Colonic mucosa (tissue), 4 donors: ENCODE measurements at regions of chr14 and their contacts with region 1.

Region 1: DNA sequence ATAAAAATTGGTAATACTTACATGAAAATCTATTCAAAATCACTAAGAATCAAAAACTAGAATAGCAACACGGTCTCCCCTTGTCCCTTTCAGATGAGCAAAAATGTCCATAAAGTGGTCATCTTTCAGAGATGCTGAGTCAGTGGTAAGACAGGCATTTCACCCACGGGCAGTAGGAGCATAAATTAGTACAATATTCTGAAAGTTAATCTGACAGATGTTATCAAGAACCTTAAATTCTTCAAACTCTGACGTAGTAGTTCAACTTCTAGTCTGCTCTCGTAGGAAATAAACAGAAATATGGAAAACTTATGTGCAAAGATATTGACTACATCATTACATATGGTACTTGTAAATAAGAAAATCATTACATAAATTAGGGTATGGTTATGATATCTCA is 33.1 kb upstream of the GNPNAT1 start:
- DNase-seq: no peak
- H3K4me3 ChIP-seq: no peak overlapping the region
- H3K27ac ChIP-seq: no peak overlapping the region
- H3K4me1 ChIP-seq: no peaks in the 10 kb centered on the region
- H3K27me3 ChIP-seq: no peaks in the 10 kb centered on the region
- CTCF ChIP-seq: no peak

Region 2: GRCh38 chr14:52961060-52961639 is 136.6 kb after region 1 on chr14:
- intact Hi-C with region 1: loop called (anchors 5 kb)
- DNase-seq: peak; percentile 28
- H3K4me3 ChIP-seq: no peak overlapping the region
- H3K27ac ChIP-seq: no peak overlapping the region
- H3K4me1 ChIP-seq: no peaks in the 10 kb centered on the region
- H3K27me3 ChIP-seq: no peaks in the 10 kb centered on the region
- CTCF ChIP-seq: no peak

Region 3: GRCh38 chr14:53044486-53044885 is 220.0 kb after region 1 on chr14:
- intact Hi-C with region 1: no loop called
- DNase-seq: no peak
- H3K4me3 ChIP-seq: no peak overlapping the region
- H3K27ac ChIP-seq: no peak overlapping the region
- H3K4me1 ChIP-seq: no peaks in the 10 kb centered on the region
- H3K27me3 ChIP-seq: no peaks in the 10 kb centered on the region
- CTCF ChIP-seq: no peak

Region 4: GRCh38 chr14:53055003-53055402 is 230.5 kb after region 1 on chr14:
- intact Hi-C with region 1: loop called (anchors 5 kb)
- DNase-seq: no peak
- H3K4me3 ChIP-seq: no peak overlapping the region
- H3K27ac ChIP-seq: no peak overlapping the region
- H3K4me1 ChIP-seq: no peaks in the 10 kb centered on the region
- H3K27me3 ChIP-seq: no peaks in the 10 kb centered on the region
- CTCF ChIP-seq: peak; percentile 68

Region 5: DNA sequence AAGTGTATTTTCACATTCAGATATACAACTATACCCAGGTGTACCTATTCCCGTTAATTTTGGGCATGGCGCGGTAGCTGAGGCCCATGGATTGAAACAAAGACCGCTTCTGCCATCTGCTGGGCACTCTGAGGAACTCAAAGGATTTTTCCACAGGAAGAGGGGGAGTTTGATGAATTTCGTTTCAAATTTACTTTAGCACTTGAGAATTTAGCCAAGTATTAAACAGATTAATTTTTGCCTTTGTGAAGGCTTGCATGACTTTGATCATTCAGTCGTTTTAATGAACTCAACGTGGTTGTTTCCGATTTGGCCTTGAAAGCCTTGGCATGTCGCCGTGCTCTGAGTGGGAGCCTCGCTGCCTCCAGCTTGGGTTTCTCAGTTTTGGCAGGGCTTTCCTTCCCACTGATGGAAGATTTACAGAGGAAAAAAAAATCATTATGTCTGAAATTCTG is 481.8 kb after region 1 on chr14:
- intact Hi-C with region 1: loop called (anchors 10 kb)
- DNase-seq: peak; percentile 33
- H3K4me3 ChIP-seq: no peak overlapping the region
- H3K27ac ChIP-seq: no peak overlapping the region
- H3K4me1 ChIP-seq: no peaks in the 10 kb centered on the region
- H3K27me3 ChIP-seq: no peaks in the 10 kb centered on the region
- CTCF ChIP-seq: peak; percentile 74